Activated B cell treated with CpG ODN at 0.5 μM for 24 hours (primary cell): ENCODE measurements at regions of chr6 and their contacts with region 1.

Region 1: GRCh38 chr6:6556738-6557505 is 31.6 kb upstream of the LY86 start:
- DNase-seq: peak; percentile 28
- ATAC-seq: peak; percentile 81
- H3K4me3 Mint-ChIP-seq: no peak overlapping the region
- H3K27ac Mint-ChIP-seq: no peak overlapping the region
- H3K4me1 Mint-ChIP-seq: peaks cover 3% of the 10 kb centered on the region
- H3K27me3 Mint-ChIP-seq: no peaks in the 10 kb centered on the region
- CTCF ChIP-seq: peak; percentile 83

Region 2: DNA sequence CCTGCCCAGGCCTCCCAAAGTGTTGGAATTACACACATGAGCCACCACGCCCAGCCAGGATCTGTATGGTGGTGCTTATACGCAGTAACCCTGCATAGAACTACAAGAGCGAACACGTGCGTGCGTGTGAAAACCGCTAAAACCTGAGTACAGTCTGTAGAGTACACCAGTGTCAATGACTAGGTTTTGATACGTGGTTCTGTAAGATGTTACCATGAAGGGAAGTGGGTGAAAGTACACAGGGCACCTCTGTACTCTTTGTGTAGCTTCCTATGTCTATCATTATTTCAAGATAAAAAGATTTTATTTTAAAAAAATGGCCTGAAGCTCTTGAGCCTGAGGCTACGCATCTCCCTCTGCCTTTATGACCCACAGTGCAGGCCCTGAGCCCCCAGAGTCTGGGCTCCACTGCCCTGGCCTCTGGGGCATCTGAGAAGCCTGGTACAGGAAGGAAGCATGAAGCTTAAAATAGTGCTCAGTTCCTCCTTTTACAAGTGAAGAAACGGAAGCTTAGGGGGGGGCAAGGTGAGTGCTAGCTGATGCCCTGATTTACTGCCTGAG is 53.2 kb after region 1 on chr6:
- CTCF ChIA-PET with region 1: interaction called, 3 read pairs
- POLR2A ChIA-PET with region 1: interaction called, 3 read pairs
- intact Hi-C with region 1: loop called (anchors 1 kb)
- DNase-seq: peak; percentile 48
- ATAC-seq: peak; percentile 93
- H3K4me3 Mint-ChIP-seq: peak overlapping the region; percentile 66
- H3K27ac Mint-ChIP-seq: peak overlapping the region; percentile 93
- H3K4me1 Mint-ChIP-seq: peaks cover 73% of the 10 kb centered on the region
- H3K27me3 Mint-ChIP-seq: no peaks in the 10 kb centered on the region
- CTCF ChIP-seq: no peak

Region 3: DNA sequence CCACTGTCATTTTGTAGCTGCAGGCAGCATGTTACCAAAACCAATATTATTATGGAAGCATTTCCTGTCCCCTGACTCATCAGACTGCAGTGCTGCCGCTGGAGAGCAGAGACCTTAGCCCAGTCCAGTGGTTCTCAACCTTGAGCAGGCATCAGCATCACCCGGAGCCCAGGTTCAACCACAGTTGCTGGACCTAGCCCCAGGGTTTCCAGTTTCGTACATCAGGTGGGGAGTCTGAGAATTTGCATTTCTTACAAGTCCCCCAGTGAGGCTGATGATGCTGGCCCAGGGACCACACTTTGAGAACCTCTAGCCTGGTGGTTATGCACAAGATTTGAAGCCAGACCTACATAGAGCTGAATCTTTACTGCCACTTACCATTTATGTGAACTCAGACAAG is 78.9 kb after region 1 on chr6:
- CTCF ChIA-PET with region 1: no interaction called
- POLR2A ChIA-PET with region 1: no interaction called
- intact Hi-C with region 1: loop called (anchors 2 kb)
- DNase-seq: no peak
- ATAC-seq: no peak
- H3K4me3 Mint-ChIP-seq: no peak overlapping the region
- H3K27ac Mint-ChIP-seq: peak overlapping the region; percentile 16
- H3K4me1 Mint-ChIP-seq: peaks cover 27% of the 10 kb centered on the region
- H3K27me3 Mint-ChIP-seq: no peaks in the 10 kb centered on the region
- CTCF ChIP-seq: no peak

Region 4: DNA sequence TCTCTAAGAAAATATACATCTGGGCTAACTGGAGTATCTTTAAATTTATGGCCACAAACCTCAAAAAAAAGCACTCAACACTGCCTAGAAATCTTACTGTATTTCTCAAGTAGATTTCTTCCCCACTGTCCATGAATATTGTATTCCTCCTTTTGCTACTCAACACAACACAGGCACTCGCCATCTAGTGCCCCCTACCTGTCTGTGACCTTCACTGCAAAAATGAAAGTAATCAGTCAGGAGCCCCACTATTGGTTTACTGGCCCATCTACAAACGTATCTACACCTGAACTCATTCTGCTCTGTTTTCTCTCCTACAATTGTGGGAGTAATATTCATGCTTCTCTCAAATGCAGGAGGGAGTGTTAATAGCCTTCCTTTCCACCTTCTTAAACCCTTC is 89.9 kb after region 1 on chr6:
- CTCF ChIA-PET with region 1: interaction called, 4 read pairs
- POLR2A ChIA-PET with region 1: no interaction called
- intact Hi-C with region 1: loop called (anchors 1 kb)
- DNase-seq: no peak
- ATAC-seq: no peak
- H3K4me3 Mint-ChIP-seq: no peak overlapping the region
- H3K27ac Mint-ChIP-seq: no peak overlapping the region
- H3K4me1 Mint-ChIP-seq: no peaks in the 10 kb centered on the region
- H3K27me3 Mint-ChIP-seq: no peaks in the 10 kb centered on the region
- CTCF ChIP-seq: no peak